ENCODE measurements at regions of chr14 and their contacts with region 1.

Region 1: GRCh38 chr14:63543000-63543825 is at the start of gene PPP2R5E:
- DNase-seq: peak; percentile 99
- ATAC-seq: peak; percentile 99
- H3K4me3 ChIP-seq: peak within 1 kb of the TSS; percentile 73 to 98 (median 92)
- H3K27ac ChIP-seq: peak within 1 kb of the TSS; percentile 87 to 96 (median 95)
- H3K4me1 ChIP-seq: peaks cover 28 to 30% of the 10 kb centered on the region in 2 donors
- H3K27me3 ChIP-seq: no peaks in the 10 kb centered on the region
- CTCF ChIP-seq: no peak
- POLR2A ChIP-seq: peak; percentile 77 to 85
- total RNA-seq, gene PPP2R5E: 14.6 to 25.8 (median 22.3) TPM

Region 2: GRCh38 chr14:63388763-63389431 is 154.3 kb before region 1 on chr14:
- in situ Hi-C with region 1: loop called in 3 of 4 experiments (anchors 5 to 10 kb)
- intact Hi-C with region 1: loop called (anchors 1 kb)
- DNase-seq: peak; percentile 12 to 41
- ATAC-seq: peak; percentile 76 to 90
- H3K4me3 ChIP-seq: no peak overlapping the region
- H3K27ac ChIP-seq: no peak overlapping the region
- H3K4me1 ChIP-seq: no peaks in the 10 kb centered on the region
- H3K27me3 ChIP-seq: no peaks in the 10 kb centered on the region
- CTCF ChIP-seq: peak; percentile 61 to 81 (median 78)
- POLR2A ChIP-seq: no peak

Region 3: GRCh38 chr14:63437953-63438757 is 105.1 kb before region 1 on chr14:
- in situ Hi-C with region 1: no loop called
- intact Hi-C with region 1: loop called (anchors 1 kb)
- DNase-seq: peak in 1 of 2 donors; percentile 37
- ATAC-seq: peak; percentile 6 to 17
- H3K4me3 ChIP-seq: peak overlapping the region in 3 of 4 donors; percentile 11 to 23 (median 16)
- H3K27ac ChIP-seq: peak overlapping the region; percentile 74 to 88 (median 85)
- H3K4me1 ChIP-seq: peaks cover 58 to 68% of the 10 kb centered on the region in 2 donors
- H3K27me3 ChIP-seq: no peaks in the 10 kb centered on the region
- CTCF ChIP-seq: peak in 1 of 5 experiments; percentile 36
- POLR2A ChIP-seq: no peak

Region 4: DNA sequence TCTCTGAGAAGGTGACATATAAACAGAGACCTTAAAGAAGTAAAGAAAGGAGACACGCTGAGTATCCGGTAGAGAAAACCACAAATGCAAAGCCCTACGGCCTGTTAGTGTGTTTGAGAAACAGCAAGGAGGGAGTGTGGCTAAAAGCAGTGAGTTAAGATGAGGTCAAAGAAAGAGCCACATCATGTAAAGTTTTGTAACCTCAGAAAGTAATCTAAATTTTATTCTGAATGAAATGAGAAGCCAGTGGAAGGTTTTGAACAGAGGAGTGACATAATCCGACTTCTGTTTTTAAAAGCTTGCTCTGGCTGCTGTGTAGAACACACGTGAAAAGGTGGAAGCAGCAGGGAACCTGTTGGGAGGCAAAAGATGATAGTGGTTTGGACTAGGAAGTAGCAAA is 32.7 kb before region 1 on chr14:
- in situ Hi-C with region 1: no loop called
- intact Hi-C with region 1: no loop called
- DNase-seq: no peak
- ATAC-seq: no peak
- H3K4me3 ChIP-seq: no peak overlapping the region
- H3K27ac ChIP-seq: no peak overlapping the region
- H3K4me1 ChIP-seq: peaks cover 23% of the 10 kb centered on the region in 2 donors
- H3K27me3 ChIP-seq: no peaks in the 10 kb centered on the region
- CTCF ChIP-seq: no peak
- POLR2A ChIP-seq: no peak

Region 5: DNA sequence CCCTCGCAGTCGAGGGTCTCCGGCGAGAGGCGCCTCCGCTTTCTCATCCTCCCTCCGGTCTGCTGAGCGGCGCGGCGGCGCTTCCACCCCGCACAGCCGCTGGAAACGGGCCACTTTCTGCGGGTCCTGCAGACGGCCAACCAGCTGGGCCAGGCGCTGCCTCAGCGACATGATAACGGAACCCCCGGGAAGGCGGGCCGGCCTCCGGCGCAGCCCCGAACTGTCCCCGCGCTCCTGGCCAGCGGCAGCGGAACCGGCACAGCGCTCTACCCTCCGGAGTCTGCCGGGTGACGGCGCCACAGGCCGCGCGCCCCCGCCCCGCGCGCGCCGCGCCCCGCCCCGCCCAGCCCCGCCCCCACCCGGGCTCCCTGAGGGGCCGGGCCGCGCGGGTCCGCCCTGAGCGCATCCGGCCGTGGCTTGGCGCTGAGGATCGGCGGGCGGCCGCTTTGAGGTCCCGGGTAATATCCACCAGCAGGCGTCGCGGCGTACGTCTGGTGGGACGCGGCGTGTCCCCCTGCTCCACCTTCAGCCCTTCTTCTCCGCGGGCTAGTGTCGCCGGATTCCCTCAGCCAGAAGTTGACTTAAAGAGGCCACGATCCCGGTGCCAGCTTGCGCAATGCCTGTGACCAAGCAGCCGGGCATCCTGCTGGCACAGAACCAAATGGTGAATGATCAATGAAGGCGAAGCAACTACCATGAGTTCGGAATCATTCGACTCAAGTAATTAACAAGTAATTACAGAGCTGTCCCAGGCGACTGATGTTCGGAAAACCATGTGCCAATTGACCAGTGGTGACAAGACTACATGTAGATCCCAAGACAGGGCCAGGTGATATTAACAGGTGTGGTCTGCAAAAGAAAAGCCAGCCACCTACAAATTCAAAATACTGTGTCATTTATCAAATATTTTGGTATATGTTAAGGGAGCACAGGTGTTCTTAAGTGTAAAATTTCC is 184.8 kb after region 1 on chr14 and contains the start of gene SGPP1:
- in situ Hi-C with region 1: no loop called
- intact Hi-C with region 1: loop called (anchors 2 kb)
- DNase-seq: peak; percentile 29 to 66
- ATAC-seq: peak; percentile 87 to 91
- H3K4me3 ChIP-seq: peak within 1 kb of the TSS; percentile 83 to 92 (median 88)
- H3K27ac ChIP-seq: peak within 1 kb of the TSS; percentile 82 to 90 (median 86)
- H3K4me1 ChIP-seq: peaks cover 17 to 18% of the 10 kb centered on the region in 2 donors
- H3K27me3 ChIP-seq: no peaks in the 10 kb centered on the region
- CTCF ChIP-seq: peak in 2 of 5 experiments; percentile 36 to 43
- POLR2A ChIP-seq: peak; percentile 64 to 66
- total RNA-seq, gene SGPP1: 3.5 to 11.3 (median 8.1) TPM

Measured in gastrocnemius medialis (tissue), 4 donors.